ENCODE measurements at regions of chr17 and their contacts with region 1.

Region 1: GRCh38 chr17:41811549-41812380 is at the start of gene P3H4:
- DNase-seq: peak; percentile 60
- ATAC-seq: peak; percentile 80
- H3K4me3 ChIP-seq: peak within 1 kb of the TSS; percentile 83 to 88 (median 87)
- H3K27ac ChIP-seq: peak within 1 kb of the TSS; percentile 82
- H3K4me1 ChIP-seq: peaks cover 60% of the 10 kb centered on the region
- H3K27me3 ChIP-seq: no peaks in the 10 kb centered on the region; a peak in 1 of 5 replicates
- CTCF ChIP-seq: peak; percentile 87
- EP300 ChIP-seq: peak; percentile 15 to 41; a peak in 1 of 4 replicates
- POLR2A ChIP-seq: peak; percentile 43 to 48; a peak in 2 of 4 replicates
- RAD21 ChIP-seq: peak; percentile 93
- total RNA-seq, gene P3H4: 13.5 and 37.1 TPM in 2 replicates

Region 2: GRCh38 chr17:41750862-41751261 is 60.9 kb before region 1 on chr17:
- CTCF ChIA-PET with region 1: no interaction called
- POLR2A ChIA-PET with region 1: no interaction called
- in situ Hi-C with region 1: no loop called
- intact Hi-C with region 1: no loop called
- DNase-seq: no peak
- ATAC-seq: no peak
- H3K4me3 ChIP-seq: no peak overlapping the region
- H3K27ac ChIP-seq: no peak overlapping the region
- H3K4me1 ChIP-seq: peaks cover 40% of the 10 kb centered on the region
- H3K27me3 ChIP-seq: no peaks in the 10 kb centered on the region; a peak in 1 of 5 replicates
- CTCF ChIP-seq: no peak
- EP300 ChIP-seq: no peak
- POLR2A ChIP-seq: no peak
- RAD21 ChIP-seq: no peak

Region 3: GRCh38 chr17:41777574-41778188 is 34.1 kb before region 1 on chr17:
- CTCF ChIA-PET with region 1: no interaction called
- POLR2A ChIA-PET with region 1: interaction called, 15 read pairs
- in situ Hi-C with region 1: no loop called
- intact Hi-C with region 1: no loop called
- DNase-seq: peak; percentile 77
- ATAC-seq: peak; percentile 61
- H3K4me3 ChIP-seq: peak overlapping the region; percentile 24 to 60 (median 42)
- H3K27ac ChIP-seq: peak overlapping the region; percentile 75
- H3K4me1 ChIP-seq: peaks cover 60% of the 10 kb centered on the region
- H3K27me3 ChIP-seq: no peaks in the 10 kb centered on the region
- CTCF ChIP-seq: no peak
- EP300 ChIP-seq: peak in 1 of 2 experiments; percentile 55; a peak in 1 of 4 replicates
- POLR2A ChIP-seq: no peak
- RAD21 ChIP-seq: no peak

Region 4: GRCh38 chr17:41792845-41793783 is 18.7 kb before region 1 on chr17:
- CTCF ChIA-PET with region 1: no interaction called
- POLR2A ChIA-PET with region 1: interaction called, 10 read pairs
- in situ Hi-C with region 1: no loop called
- intact Hi-C with region 1: no loop called
- DNase-seq: peak; percentile 68
- ATAC-seq: peak; percentile 83
- H3K4me3 ChIP-seq: peak overlapping the region; percentile 47 to 66 (median 55)
- H3K27ac ChIP-seq: peak overlapping the region; percentile 53
- H3K4me1 ChIP-seq: peaks cover 54% of the 10 kb centered on the region
- H3K27me3 ChIP-seq: no peaks in the 10 kb centered on the region; a peak in 1 of 5 replicates
- CTCF ChIP-seq: no peak; the same call in 1 of the 2 replicates
- EP300 ChIP-seq: no peak; a peak in 1 of 4 replicates
- POLR2A ChIP-seq: no peak; a peak in 1 of 4 replicates
- RAD21 ChIP-seq: no peak; the same call in 1 of the 2 replicates

Region 5: DNA sequence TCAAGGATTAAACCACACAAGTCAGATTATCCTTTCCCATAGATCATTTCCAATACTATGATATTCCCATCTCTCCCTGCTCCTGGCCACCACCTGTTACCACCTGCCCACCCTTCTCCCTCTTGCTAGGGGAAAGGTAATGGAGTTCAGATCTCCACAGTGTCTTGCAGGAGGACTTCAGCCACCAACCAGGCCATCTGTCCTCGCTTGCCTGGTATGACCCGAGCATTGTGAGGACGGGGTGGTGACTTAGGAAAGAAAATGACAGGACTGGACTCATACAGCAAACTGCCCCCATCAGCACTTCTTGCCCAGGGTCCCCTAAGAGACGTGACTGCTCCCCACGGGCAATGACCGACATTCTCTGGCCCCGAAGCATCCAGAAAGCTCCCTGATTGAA is 11.8 kb after region 1 on chr17:
- CTCF ChIA-PET with region 1: no interaction called
- POLR2A ChIA-PET with region 1: interaction called, 10 read pairs
- in situ Hi-C with region 1: no loop called
- intact Hi-C with region 1: no loop called
- DNase-seq: no peak
- ATAC-seq: peak; percentile 9
- H3K4me3 ChIP-seq: no peak overlapping the region
- H3K27ac ChIP-seq: no peak overlapping the region
- H3K4me1 ChIP-seq: peaks cover 37% of the 10 kb centered on the region
- H3K27me3 ChIP-seq: no peaks in the 10 kb centered on the region
- CTCF ChIP-seq: no peak
- EP300 ChIP-seq: no peak
- POLR2A ChIP-seq: no peak; a peak in 1 of 4 replicates
- RAD21 ChIP-seq: no peak

Region 6: DNA sequence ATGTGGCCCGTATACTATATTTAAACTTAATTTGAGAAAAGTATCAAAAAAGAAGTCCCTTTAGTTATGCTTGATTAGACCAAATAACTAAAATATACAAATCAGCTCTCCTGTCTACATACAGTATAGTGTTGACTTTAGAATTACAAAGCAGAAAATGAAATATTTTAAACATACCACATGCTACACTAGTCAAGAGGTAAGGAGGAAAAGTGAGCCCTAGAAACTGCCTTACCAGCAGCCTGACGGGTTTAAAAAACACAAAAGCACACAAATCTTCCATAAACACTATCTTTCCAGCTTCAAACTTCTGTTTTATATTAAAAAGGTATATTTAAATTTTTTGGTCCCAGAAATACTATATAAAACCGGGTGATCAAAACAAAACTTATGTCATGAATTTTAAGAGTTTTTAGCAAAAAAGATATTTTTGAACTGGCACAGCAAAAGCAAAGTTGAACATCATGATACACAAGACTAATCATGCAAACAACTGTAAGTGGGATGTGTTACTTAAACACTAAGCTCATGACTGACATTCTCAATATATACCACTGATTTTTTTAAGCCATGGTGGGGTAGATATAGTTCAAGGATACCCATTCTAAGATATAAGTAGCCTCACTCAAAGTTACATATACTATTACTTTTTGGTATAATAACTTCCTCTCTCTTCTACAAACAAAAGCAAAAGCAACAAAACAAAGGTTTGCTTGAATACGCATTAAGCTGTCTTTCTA is 37.7 kb after region 1 on chr17:
- CTCF ChIA-PET with region 1: no interaction called
- POLR2A ChIA-PET with region 1: no interaction called
- in situ Hi-C with region 1: no loop called
- intact Hi-C with region 1: no loop called
- DNase-seq: no peak
- ATAC-seq: no peak
- H3K4me3 ChIP-seq: no peak overlapping the region
- H3K27ac ChIP-seq: no peak overlapping the region
- H3K4me1 ChIP-seq: no peaks in the 10 kb centered on the region
- H3K27me3 ChIP-seq: no peaks in the 10 kb centered on the region
- CTCF ChIP-seq: no peak
- EP300 ChIP-seq: no peak
- POLR2A ChIP-seq: no peak
- RAD21 ChIP-seq: no peak

Region 7: GRCh38 chr17:41918314-41919164 is 106.8 kb after region 1 on chr17 and contains the start of gene ACLY:
- CTCF ChIA-PET with region 1: no interaction called
- POLR2A ChIA-PET with region 1: interaction called, 15 read pairs
- in situ Hi-C with region 1: no loop called
- intact Hi-C with region 1: no loop called
- DNase-seq: peak; percentile 97
- ATAC-seq: peak; percentile 93
- H3K4me3 ChIP-seq: peak within 1 kb of the TSS; percentile 96 to 98 (median 97)
- H3K27ac ChIP-seq: peak within 1 kb of the TSS; percentile 81
- H3K4me1 ChIP-seq: peaks cover 71% of the 10 kb centered on the region
- H3K27me3 ChIP-seq: no peaks in the 10 kb centered on the region; a peak in 1 of 5 replicates
- CTCF ChIP-seq: no peak
- EP300 ChIP-seq: 0 out of 4 replicates have a peak, but pooled peaks of 1 of the 2 experiments have one; percentile 45
- POLR2A ChIP-seq: peak; percentile 88 to 97
- RAD21 ChIP-seq: no peak; the same call in none of the 2 replicates
- total RNA-seq, gene ACLY: 218 and 277 TPM in 2 replicates

Measured in HepG2 (cell line).